Caco-2 (cell line): ENCODE measurements at regions of chr2 and their contacts with region 1.

Region 1: DNA sequence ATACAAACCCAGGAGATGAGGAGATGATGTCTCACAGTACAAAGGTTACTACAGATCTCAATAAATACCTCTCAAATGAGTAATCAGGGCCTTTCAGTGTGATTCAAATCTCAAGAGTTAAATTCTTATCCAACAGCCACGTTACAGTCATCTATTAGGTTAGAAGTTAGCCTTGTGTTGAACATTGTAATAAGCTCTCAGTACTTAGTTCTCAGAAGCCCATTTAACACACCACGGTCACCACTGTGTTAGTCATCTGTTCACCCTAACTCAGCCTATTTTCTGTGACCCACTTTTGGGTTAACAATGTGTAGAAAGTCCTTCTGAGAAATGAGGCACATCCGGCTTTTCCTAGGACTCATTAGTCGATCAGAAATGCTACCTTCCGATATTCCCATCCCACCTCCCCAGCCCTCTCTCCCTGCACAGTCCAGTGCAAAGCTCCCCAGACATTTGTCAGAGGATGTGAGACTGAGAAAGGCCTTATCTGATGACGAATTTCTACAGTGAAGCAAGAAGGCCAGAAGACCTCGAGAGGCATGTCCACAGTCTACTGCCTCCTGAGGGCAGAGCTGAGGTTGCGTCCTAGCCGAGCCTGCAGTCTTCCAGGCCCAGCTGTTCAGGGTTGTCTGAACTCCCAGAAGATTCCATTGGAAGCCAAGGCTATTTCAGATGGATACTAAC is 92.6 kb downstream of the ACTR2 start:
- DNase-seq: peak; percentile 69 to 80
- H3K4me3 ChIP-seq: no peak overlapping the region
- H3K4me3 Mint-ChIP-seq: peak overlapping the region; percentile 57
- H3K27ac Mint-ChIP-seq: peak overlapping the region; percentile 81
- H3K4me1 ChIP-seq: peaks cover 30% of the 10 kb centered on the region
- H3K4me1 Mint-ChIP-seq: peaks cover 16% of the 10 kb centered on the region
- H3K27me3 ChIP-seq: no peaks in the 10 kb centered on the region
- H3K27me3 Mint-ChIP-seq: no peaks in the 10 kb centered on the region
- CTCF ChIP-seq: peak; percentile 33 to 61

Region 2: DNA sequence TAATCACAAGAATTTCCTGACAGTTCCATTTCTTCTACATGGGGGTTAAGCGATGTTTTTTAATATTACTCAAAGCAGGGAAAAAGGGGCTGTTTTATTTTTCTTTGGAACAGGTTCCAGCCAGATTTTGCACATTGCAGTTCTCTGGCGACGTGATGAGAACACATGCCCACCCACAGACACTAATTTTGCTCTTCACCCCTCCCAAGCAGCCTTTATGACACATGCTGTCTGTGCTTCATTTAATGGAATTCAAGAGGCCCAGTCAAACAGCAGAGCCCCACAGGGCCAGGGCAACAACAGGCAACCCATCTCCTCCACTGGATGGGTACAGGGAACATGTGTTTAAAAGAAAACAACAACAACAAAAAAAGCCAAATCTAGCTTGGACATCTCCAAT is 41.4 kb after region 1 on chr2:
- CTCF ChIA-PET with region 1: no interaction called
- POLR2A ChIA-PET with region 1: no interaction called
- intact Hi-C with region 1: loop called (anchors 5 kb)
- DNase-seq: no peak
- H3K4me3 ChIP-seq: no peak overlapping the region
- H3K4me3 Mint-ChIP-seq: peak overlapping the region; percentile 40
- H3K27ac Mint-ChIP-seq: peak overlapping the region; percentile 57
- H3K4me1 ChIP-seq: peaks cover 68% of the 10 kb centered on the region
- H3K4me1 Mint-ChIP-seq: peaks cover 50% of the 10 kb centered on the region
- H3K27me3 ChIP-seq: no peaks in the 10 kb centered on the region
- H3K27me3 Mint-ChIP-seq: no peaks in the 10 kb centered on the region
- CTCF ChIP-seq: no peak